Mammary epithelial cell (primary cell): ENCODE measurements at regions of chr16 and their contacts with region 1.

Region 1: GRCh38 chr16:2777231-2777902 is at the start of gene ELOB:
- DNase-seq: peak; percentile 76
- H3K4me3 ChIP-seq: peak within 1 kb of the TSS; percentile 69 to 97 (median 93)
- H3K27ac ChIP-seq: peak within 1 kb of the TSS; percentile 95
- H3K4me1 ChIP-seq: peaks cover 16% of the 10 kb centered on the region
- H3K27me3 ChIP-seq: no peaks in the 10 kb centered on the region
- CTCF ChIP-seq: no peak
- total RNA-seq, gene ELOB: 225 to 294 TPM

Region 2: DNA sequence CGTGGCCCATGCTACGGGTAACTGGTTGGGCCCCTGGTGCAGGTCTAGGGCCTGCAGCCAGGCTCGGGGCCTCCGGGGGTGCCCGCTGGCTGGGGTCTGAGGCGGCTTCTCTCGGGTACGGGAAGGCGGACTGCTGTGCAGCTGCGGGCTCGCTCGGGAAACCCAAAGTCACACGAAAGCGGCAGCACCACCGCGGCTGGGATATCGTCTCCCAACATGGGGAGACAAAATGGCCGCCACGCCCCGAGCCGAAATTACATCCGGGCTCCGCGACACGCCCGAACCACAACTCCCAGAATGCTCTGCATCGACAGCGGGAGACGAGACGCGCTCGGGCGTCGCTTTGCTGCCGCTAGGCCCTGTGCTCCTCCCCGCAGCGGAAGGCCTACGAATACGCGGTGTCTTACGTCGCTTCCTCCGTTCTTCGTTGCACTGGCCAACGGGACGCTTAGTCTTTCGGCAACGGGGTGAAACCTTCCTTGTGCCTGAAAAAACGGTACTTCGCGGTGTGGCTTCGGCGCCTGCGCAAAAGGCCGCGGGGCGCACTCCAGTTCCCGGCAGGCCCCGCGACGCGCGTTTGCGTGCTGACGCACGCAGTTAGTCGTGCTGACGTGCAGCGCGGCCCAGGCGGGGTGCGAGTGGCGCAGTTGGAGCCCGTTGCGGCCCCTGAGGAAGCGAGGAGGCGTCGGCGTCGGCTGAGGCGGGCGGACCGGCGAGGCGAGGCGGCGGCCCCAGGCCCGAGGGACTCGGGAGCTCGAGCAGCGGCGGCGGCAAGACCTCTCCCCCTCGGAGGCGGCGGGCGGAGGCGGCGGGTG is 25.1 kb before region 1 on chr16 and contains the start of gene SRRM2:
- CTCF ChIA-PET with region 1: no interaction called
- dilution Hi-C with region 1: no loop called
- in situ Hi-C with region 1: no loop called
- intact Hi-C with region 1: loop called (anchors 2 kb)
- DNase-seq: peak; percentile 95
- H3K4me3 ChIP-seq: peak within 1 kb of the TSS; percentile 69 to 95 (median 95)
- H3K27ac ChIP-seq: peak within 1 kb of the TSS; percentile 91
- H3K4me1 ChIP-seq: peaks cover 21% of the 10 kb centered on the region
- H3K27me3 ChIP-seq: no peaks in the 10 kb centered on the region
- CTCF ChIP-seq: no peak
- total RNA-seq, gene SRRM2: 76.5 to 493 TPM

Region 3: GRCh38 chr16:2867987-2868789 is 90.8 kb after region 1 on chr16:
- CTCF ChIA-PET with region 1: interaction called, 10 read pairs
- dilution Hi-C with region 1: no loop called
- in situ Hi-C with region 1: no loop called
- intact Hi-C with region 1: loop called (anchors 1 kb)
- DNase-seq: peak; percentile 90
- H3K4me3 ChIP-seq: peak overlapping the region; percentile 55 to 65 (median 62)
- H3K27ac ChIP-seq: peak overlapping the region; percentile 70
- H3K4me1 ChIP-seq: peaks cover 7% of the 10 kb centered on the region
- H3K27me3 ChIP-seq: no peaks in the 10 kb centered on the region
- CTCF ChIP-seq: peak; percentile 90 to 97

Region 4: GRCh38 chr16:4660454-4661007 is 1883.2 kb after region 1 on chr16:
- CTCF ChIA-PET with region 1: no interaction called
- dilution Hi-C with region 1: no loop called
- in situ Hi-C with region 1: no loop called
- intact Hi-C with region 1: no loop called
- DNase-seq: peak; percentile 70
- H3K4me3 ChIP-seq: no peak overlapping the region
- H3K27ac ChIP-seq: peak overlapping the region; percentile 44
- H3K4me1 ChIP-seq: peaks cover 51% of the 10 kb centered on the region
- H3K27me3 ChIP-seq: no peaks in the 10 kb centered on the region
- CTCF ChIP-seq: no peak